ENCODE measurements at regions of chr18 and their contacts with region 1.

Region 1: DNA sequence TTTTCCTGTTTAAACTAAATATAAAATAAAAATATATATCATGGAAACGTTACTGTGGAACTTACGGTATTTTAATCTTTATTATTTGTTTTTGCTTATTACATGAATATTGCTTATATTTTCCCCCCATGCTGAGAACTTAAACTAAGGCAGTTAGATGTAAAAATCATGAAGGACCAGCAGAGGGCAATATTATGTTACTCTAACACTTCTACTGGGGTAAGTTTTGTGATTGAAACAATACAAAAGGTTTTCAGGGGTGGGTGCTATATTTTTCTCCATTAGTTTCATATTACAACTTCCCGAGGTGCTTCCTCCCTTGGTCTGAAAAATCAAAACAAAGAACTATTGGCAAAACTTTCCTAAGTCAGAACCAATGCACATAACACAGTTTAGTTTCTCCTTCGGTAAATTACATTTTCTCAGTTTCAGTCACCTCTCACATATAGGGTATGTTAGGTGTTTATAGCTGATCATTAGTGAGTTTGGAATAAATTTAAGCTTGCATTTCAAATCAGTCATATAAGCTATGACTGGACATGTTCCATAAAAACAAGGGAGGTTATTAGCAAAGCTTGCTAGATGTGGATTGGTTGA is 54.8 kb downstream of the ZNF407 start:
- DNase-seq: peak; percentile 33
- ATAC-seq: peak; percentile 89
- H3K4me3 ChIP-seq: no peak overlapping the region
- H3K27ac ChIP-seq: no peak overlapping the region
- H3K4me1 ChIP-seq: no peaks in the 10 kb centered on the region
- H3K27me3 ChIP-seq: no peaks in the 10 kb centered on the region
- CTCF ChIP-seq: peak; percentile 73; the same call in 1 of the 2 replicates

Region 2: DNA sequence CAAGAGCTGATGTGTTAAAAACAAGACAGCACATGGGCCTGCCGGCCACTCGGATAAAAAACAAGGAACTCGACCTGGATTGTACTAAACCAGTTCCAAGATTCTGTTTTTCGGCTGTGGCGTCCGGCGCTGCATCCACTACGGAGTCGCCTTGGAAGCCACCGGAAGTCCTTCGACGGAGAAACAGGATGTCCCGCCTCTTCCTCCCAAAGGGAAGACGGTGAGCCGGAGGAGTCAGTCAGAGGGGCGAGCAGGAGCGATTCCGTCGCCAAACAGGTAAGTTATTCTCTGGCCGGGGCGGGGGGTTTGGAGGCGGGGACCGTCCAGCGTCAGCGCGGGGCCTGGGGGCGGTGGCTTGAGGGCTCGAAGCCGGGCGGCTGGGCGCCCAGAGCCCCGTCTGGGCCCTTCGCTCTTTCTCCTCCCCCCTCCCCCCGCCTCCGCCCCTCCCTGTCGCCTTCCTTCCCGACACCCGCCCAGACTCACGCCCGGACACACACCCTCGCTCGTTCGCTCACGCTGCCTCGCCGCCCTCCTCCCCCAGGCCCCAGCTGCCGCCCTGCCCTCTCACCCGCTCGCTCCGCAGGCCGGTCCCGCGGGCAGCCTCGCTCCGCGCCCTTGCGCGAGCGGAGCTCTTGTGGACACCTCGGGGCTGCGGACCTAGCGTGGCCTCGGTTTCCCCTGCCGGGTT is 54.7 kb before region 1 on chr18 and contains the start of gene ZNF407:
- CTCF ChIA-PET with region 1: no interaction called
- POLR2A ChIA-PET with region 1: no interaction called
- in situ Hi-C with region 1: no loop called
- intact Hi-C with region 1: no loop called
- DNase-seq: peak; percentile 85
- ATAC-seq: peak; percentile 93
- H3K4me3 ChIP-seq: peak within 1 kb of the TSS; percentile 70 to 90
- H3K27ac ChIP-seq: peak within 1 kb of the TSS; percentile 99
- H3K4me1 ChIP-seq: peaks cover 11% of the 10 kb centered on the region
- H3K27me3 ChIP-seq: no peaks in the 10 kb centered on the region
- CTCF ChIP-seq: no peak
- total RNA-seq, gene ZNF407: 16.8 TPM

Region 3: GRCh38 chr18:74896390-74896991 is 244.0 kb after region 1 on chr18:
- CTCF ChIA-PET with region 1: no interaction called
- POLR2A ChIA-PET with region 1: no interaction called
- in situ Hi-C with region 1: no loop called
- intact Hi-C with region 1: loop called (anchors 10 kb)
- DNase-seq: peak; percentile 80
- ATAC-seq: peak; percentile 96
- H3K4me3 ChIP-seq: no peak overlapping the region
- H3K27ac ChIP-seq: no peak overlapping the region
- H3K4me1 ChIP-seq: peaks cover 20% of the 10 kb centered on the region
- H3K27me3 ChIP-seq: no peaks in the 10 kb centered on the region
- CTCF ChIP-seq: peak; percentile 92

Region 4: DNA sequence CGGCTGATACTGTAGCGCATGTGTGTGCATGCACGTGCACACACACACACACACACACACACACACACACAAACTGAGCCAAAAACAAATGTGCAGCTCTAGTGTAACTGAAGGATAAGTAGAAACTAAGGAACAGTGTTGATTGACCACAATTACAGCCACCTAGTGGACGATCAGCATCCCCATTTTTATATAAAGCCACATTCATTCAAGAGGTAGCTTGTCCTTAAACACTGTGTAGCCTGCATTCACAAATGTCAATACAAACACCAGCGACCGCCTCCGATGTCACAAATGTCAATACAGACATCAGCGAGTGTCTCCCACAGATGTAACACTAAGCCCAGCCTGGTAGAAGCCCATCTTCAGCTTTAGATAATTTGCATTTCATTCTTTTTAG is 389.1 kb after region 1 on chr18:
- CTCF ChIA-PET with region 1: interaction called, 5 read pairs
- POLR2A ChIA-PET with region 1: no interaction called
- in situ Hi-C with region 1: no loop called
- intact Hi-C with region 1: loop called (anchors 10 kb)
- DNase-seq: peak; percentile 30
- ATAC-seq: peak; percentile 90
- H3K4me3 ChIP-seq: no peak overlapping the region
- H3K27ac ChIP-seq: no peak overlapping the region
- H3K4me1 ChIP-seq: no peaks in the 10 kb centered on the region
- H3K27me3 ChIP-seq: no peaks in the 10 kb centered on the region
- CTCF ChIP-seq: peak; percentile 84

Region 5: DNA sequence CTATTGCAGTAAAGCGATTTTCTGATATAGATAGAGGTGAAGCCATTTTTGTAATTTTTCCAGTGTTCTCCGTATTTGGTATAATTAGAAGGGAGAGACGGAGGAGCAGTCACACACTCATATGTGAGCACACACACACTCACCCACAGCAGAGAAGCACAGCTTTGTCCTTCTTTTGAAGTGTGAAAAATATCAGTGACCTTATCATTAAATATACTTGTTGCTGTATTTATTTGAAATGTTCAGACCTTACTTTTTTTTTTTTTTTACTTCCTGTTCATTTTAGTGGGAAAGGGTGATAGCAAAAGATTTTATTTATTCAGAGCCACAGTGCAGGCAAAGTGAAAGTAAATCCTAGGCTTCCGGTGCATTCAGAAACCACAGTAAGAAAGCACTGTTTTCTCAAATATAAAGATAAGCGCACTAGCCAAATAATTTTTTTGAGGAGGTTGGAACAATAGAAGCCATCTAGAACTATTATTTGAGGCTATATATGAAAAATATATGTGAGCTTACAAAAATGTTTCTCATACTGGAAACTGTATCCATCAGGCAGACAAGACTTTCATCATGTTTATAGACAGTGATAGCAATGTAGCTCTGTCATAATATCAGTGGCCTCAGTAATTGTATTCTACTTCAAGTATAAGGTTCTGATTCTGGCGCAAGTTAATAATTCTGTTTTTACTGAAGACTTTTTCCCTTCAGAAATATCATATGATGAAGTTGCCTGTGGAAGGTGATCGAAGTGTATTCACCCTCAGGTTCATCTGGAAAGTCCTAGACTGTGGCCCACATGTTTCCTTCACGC is 595.3 kb after region 1 on chr18:
- CTCF ChIA-PET with region 1: no interaction called
- POLR2A ChIA-PET with region 1: no interaction called
- in situ Hi-C with region 1: no loop called
- intact Hi-C with region 1: loop called (anchors 10 kb)
- DNase-seq: peak; percentile 61
- ATAC-seq: peak; percentile 43
- H3K4me3 ChIP-seq: peak overlapping the region; percentile 37 to 47
- H3K27ac ChIP-seq: peak overlapping the region; percentile 92
- H3K4me1 ChIP-seq: peaks cover 27% of the 10 kb centered on the region
- H3K27me3 ChIP-seq: no peaks in the 10 kb centered on the region
- CTCF ChIP-seq: no peak

Region 6: DNA sequence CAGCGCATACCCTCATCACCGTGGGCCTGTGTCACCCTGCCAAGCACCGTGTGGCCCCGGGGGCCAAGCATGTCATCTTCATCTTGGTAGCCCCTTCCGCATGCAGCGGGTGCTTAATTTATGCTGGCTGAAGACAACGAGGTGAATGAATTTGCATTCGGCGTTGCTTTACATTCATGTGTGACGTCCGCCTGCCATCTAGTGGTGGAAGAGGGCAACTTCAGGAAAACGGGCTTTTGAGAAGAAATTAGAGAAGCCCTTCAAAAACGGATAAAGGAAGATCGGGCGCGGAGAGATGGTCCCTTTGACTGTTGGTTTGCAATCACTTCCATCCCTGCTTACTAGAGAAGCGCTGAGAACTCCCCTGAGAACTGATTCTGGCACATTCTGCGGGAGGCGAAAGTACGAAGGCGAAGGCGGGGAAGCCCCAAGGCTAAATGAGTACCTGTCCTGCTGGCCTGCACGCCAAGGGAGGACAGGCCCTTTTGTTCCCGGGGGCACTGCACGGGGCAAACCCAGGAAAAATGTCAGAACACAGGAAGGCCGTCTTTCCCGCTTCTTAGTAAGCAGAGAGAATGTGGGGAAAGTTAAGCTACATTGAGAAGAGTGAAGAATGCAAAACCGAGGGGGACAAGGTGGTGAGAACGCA is 1696.7 kb after region 1 on chr18:
- CTCF ChIA-PET with region 1: no interaction called
- POLR2A ChIA-PET with region 1: no interaction called
- in situ Hi-C with region 1: no loop called
- intact Hi-C with region 1: loop called (anchors 10 kb)
- DNase-seq: peak; percentile 55
- ATAC-seq: peak; percentile 65
- H3K4me3 ChIP-seq: peak overlapping the region; percentile 20 to 44
- H3K27ac ChIP-seq: no peak overlapping the region
- H3K4me1 ChIP-seq: peaks cover 18% of the 10 kb centered on the region
- H3K27me3 ChIP-seq: no peaks in the 10 kb centered on the region
- CTCF ChIP-seq: no peak